Caco-2 (cell line): ENCODE measurements at regions of chr12 and their contacts with region 1.

Region 1: GRCh38 chr12:120086801-120087621 is 29.5 kb downstream of the RAB35 start:
- DNase-seq: peak; percentile 98 to 99
- H3K4me3 ChIP-seq: peak overlapping the region; percentile 38
- H3K4me3 Mint-ChIP-seq: peak overlapping the region; percentile 76
- H3K27ac Mint-ChIP-seq: peak overlapping the region; percentile 93
- H3K4me1 ChIP-seq: peaks cover 4% of the 10 kb centered on the region; the same call in 1 of the 2 replicates
- H3K4me1 Mint-ChIP-seq: no peaks in the 10 kb centered on the region
- H3K27me3 ChIP-seq: no peaks in the 10 kb centered on the region
- H3K27me3 Mint-ChIP-seq: no peaks in the 10 kb centered on the region
- CTCF ChIP-seq: peak; percentile 94 to 95

Region 2: DNA sequence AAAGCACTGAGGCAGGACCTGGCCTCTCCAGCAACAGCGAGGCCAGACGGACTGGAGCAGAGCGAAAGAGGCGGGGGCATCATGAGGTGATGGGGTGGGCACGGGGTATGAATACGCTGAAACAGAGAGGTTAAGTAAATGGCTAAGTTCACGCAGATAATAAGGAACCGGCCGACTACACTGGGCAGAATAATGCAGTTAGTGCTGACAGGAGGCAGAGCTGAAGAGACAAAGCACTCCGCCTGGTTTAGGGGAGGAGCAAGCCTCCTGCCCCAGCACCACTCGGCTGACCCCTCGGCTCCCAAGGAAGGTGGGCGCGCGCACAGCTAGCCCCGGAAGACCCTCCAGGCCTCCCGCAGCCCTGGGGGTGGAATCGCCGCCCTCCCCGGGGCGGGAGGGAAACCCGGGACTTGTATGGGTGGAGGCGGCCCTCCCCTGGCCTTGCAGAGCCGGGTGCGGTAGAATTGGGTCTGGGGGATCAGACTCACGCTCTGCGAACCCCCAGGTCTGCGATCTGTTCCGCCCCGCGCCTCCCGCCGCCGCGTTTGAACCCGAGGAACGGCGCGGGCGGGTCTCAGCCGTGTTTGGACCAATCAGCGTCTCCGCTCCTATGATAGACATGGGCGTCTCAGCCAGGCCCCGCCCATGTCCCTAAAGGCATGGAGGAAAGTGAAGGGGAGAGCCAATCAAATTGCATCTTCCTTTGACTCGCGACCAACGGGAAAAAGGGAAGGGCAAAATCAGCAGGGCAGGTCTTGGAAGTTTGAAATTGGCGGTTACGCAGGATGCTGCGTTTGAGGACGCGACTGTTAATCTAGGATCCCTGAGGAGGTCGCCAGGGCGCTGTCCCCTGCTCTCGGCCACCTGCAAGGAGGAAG is 210.0 kb before region 1 on chr12 and contains the start of gene CIT:
- CTCF ChIA-PET with region 1: no interaction called
- POLR2A ChIA-PET with region 1: no interaction called
- intact Hi-C with region 1: loop called (anchors 1 kb)
- DNase-seq: peak; percentile 92 to 94
- H3K4me3 ChIP-seq: peak within 1 kb of the TSS; percentile 98
- H3K4me3 Mint-ChIP-seq: peak within 1 kb of the TSS; percentile 91
- H3K27ac Mint-ChIP-seq: peak within 1 kb of the TSS; percentile 82
- H3K4me1 ChIP-seq: no peaks in the 10 kb centered on the region
- H3K4me1 Mint-ChIP-seq: peaks cover 13% of the 10 kb centered on the region
- H3K27me3 ChIP-seq: no peaks in the 10 kb centered on the region
- H3K27me3 Mint-ChIP-seq: peaks cover 3% of the 10 kb centered on the region
- CTCF ChIP-seq: peak in 1 of 2 experiments; percentile 0
- total RNA-seq, gene CIT: 55.9 and 62.3 TPM in 2 replicates

Region 3: DNA sequence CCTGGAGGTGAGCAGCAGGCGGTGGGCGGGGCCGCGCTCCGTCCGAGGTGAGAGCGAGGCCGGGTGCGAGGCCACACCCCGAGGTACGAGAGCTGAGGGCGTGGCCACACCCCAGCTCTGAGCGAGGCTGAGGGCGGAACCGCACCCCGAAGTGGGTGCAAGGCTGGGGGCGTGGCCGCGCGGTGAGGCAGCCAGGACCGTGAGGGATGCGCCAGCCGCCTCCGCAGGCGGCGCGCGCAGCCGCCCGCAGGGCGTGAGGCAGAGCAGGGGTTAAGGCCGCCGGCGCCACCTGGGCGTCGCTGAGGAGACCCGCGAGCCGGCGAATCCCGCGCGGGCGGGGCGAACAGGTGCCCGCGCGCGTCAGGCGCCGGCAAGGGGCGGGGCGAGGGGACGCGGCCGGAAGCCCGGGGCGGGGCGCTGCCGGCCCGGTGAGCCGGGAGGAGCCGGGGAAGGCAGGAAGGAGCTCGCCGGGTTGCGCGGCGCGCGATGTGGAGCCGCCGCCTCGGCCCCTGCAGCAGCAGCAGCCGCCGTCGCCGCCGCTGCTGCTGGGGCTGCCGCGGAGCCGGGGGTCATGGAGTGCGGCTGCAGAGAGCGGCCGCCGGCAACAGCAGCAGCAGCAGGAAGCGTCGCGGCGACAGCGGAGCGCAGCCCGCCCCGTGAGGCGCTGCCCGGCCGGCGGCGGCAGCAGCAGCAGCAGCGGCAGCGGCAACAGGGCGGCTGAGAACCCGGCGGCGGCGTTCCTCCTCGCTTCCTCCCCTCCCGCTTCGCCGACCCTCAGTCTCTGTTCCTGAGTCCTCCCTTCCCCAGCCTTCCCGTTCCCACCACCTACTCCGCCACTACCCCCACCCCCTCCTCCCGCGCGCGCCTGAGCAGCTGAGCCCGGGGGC is 98.0 kb before region 1 on chr12 and contains the start of gene BICDL1:
- CTCF ChIA-PET with region 1: interaction called, 20 read pairs
- POLR2A ChIA-PET with region 1: interaction called, 7 read pairs
- intact Hi-C with region 1: loop called (anchors 1 kb)
- DNase-seq: peak; percentile 93 to 95
- H3K4me3 ChIP-seq: peak within 1 kb of the TSS; percentile 73
- H3K4me3 Mint-ChIP-seq: peak within 1 kb of the TSS; percentile 81
- H3K27ac Mint-ChIP-seq: no peak within 1 kb of the TSS
- H3K4me1 ChIP-seq: peaks cover 8% of the 10 kb centered on the region
- H3K4me1 Mint-ChIP-seq: no peaks in the 10 kb centered on the region
- H3K27me3 ChIP-seq: no peaks in the 10 kb centered on the region
- H3K27me3 Mint-ChIP-seq: no peaks in the 10 kb centered on the region
- CTCF ChIP-seq: no peak
- total RNA-seq, gene BICDL1: 10.8 and 14.2 TPM in 2 replicates

Region 4: DNA sequence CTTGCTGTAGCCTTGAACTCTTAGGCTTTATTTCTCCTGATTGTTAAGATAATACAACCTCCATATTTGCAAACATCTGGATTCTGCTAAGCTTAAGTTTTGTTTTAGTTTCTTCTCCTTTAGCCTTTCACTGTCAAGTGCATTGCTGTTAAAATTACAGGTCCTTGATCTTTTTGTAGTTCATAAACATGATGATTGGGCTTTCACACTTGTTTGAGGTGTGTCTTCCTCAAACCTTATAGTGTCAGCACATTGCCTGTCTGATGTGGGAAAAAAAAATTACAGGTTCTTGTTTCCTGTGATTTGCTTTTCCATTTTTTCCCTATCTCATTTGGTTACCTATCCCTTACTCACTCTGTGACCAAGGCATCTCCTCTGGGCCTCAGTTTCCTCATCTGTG is 38.7 kb before region 1 on chr12:
- CTCF ChIA-PET with region 1: no interaction called
- POLR2A ChIA-PET with region 1: no interaction called
- intact Hi-C with region 1: loop called (anchors 5 kb)
- DNase-seq: no peak
- H3K4me3 ChIP-seq: no peak overlapping the region
- H3K4me3 Mint-ChIP-seq: no peak overlapping the region
- H3K27ac Mint-ChIP-seq: no peak overlapping the region
- H3K4me1 ChIP-seq: peaks cover 5% of the 10 kb centered on the region; the same call in 1 of the 2 replicates
- H3K4me1 Mint-ChIP-seq: no peaks in the 10 kb centered on the region
- H3K27me3 ChIP-seq: no peaks in the 10 kb centered on the region
- H3K27me3 Mint-ChIP-seq: no peaks in the 10 kb centered on the region
- CTCF ChIP-seq: no peak

Region 5: DNA sequence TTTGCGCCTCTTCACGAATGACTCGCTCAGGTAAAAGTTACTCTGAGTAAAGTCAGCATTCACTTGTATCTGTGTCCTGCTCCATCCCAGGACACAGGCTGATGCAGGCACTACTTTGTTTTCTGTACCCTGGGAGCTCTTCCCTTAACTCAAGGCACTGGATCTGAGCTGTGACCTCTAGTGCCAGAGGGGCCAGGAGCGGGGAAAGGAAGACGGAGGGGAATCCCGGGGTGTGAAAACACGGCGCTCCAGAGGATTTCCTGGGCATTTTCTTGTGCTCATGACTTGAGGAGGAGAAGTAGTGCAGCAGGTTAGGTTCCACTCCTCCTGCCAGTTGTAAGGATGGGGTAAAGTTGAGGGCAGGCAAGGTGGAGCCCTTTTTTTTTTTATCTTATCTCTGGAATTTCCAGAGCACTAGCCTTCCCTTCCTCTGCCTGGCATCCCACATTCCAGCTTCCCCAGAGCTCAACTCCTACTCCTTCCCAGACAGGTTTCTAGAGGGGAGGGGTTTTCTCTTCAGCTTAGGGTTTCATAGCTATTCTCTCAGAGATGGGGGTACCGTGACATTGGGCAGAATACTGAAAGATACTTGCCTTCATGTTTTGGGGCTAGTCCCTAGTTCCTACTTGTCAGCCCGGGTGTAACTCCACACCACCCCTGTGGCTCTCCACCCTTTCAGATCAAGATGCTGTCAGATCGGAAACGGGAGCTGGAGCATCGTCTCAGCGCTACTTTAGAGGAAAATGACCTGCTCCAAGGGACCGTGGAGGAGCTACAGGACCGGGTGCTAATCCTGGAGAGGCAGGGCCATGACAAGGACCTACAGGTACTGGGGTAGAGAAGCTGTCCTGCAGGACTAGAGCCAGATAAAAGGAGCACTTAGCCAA is 22.7 kb before region 1 on chr12:
- CTCF ChIA-PET with region 1: interaction called, 9 read pairs
- POLR2A ChIA-PET with region 1: interaction called, 3 read pairs
- intact Hi-C with region 1: loop called (anchors 2 kb)
- DNase-seq: peak; percentile 51 to 74
- H3K4me3 ChIP-seq: no peak overlapping the region
- H3K4me3 Mint-ChIP-seq: peak overlapping the region; percentile 36
- H3K27ac Mint-ChIP-seq: peak overlapping the region; percentile 73
- H3K4me1 ChIP-seq: peaks cover 41% of the 10 kb centered on the region
- H3K4me1 Mint-ChIP-seq: peaks cover 28% of the 10 kb centered on the region
- H3K27me3 ChIP-seq: no peaks in the 10 kb centered on the region
- H3K27me3 Mint-ChIP-seq: no peaks in the 10 kb centered on the region
- CTCF ChIP-seq: no peak

Region 6: DNA sequence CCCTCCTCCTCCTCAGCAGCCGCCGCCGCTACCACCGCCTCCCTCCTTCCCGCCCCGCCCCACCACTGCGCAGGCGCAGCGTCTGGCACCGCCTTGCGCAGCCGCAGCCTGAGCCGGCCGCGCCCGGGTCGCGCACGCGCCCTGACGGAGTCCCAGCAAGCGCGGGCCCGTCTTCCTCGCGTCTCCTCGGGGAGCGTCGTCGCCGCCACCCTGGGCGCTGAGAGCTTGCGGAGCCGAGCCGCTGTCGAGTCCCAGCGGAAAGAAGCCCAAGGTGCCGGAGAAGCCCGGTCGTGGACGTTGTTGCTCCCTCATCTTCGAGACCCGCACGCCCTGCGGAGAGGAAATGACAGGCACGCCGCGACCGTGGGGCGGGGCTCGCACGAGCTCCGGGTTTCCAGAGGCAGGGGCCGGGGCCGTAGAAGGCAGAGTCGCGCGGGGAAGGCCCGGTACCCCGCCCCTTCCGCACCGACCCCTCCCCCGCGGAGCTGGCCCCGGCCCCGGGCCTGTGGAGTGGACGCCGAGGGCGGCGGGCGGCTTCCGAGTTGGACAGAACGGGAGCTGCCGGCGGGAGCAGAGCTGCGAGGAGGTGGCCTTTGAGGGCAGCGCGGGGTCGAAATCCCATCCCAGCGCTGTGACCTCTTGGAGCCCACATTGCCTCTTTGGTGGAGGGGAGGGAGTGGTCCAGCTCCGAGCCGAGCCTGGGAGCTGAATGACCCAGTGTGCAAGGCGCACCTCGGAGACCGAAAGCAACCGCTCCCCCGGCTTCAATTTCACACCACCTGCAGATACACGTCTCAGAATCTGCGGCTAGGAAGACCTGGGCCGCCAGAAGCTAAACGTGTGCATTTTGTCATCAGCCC is 30.0 kb after region 1 on chr12:
- CTCF ChIA-PET with region 1: interaction called, 11 read pairs
- POLR2A ChIA-PET with region 1: interaction called, 6 read pairs
- intact Hi-C with region 1: no loop called
- DNase-seq: peak; percentile 96 to 99
- H3K4me3 ChIP-seq: peak overlapping the region; percentile 86
- H3K4me3 Mint-ChIP-seq: peak overlapping the region; percentile 84
- H3K27ac Mint-ChIP-seq: peak overlapping the region; percentile 92
- H3K4me1 ChIP-seq: peaks cover 26% of the 10 kb centered on the region
- H3K4me1 Mint-ChIP-seq: peaks cover 24% of the 10 kb centered on the region
- H3K27me3 ChIP-seq: no peaks in the 10 kb centered on the region
- H3K27me3 Mint-ChIP-seq: no peaks in the 10 kb centered on the region
- CTCF ChIP-seq: no peak